ENCODE measurements at regions of chr12 and their contacts with region 1.

Region 1: GRCh38 chr12:19572920-19573558 is 133.7 kb downstream of the AEBP2 start:
- DNase-seq: peak; percentile 45
- H3K4me3 Mint-ChIP-seq: no peak overlapping the region
- H3K27ac Mint-ChIP-seq: no peak overlapping the region
- H3K4me1 Mint-ChIP-seq: no peaks in the 10 kb centered on the region
- H3K27me3 Mint-ChIP-seq: no peaks in the 10 kb centered on the region
- CTCF ChIP-seq: peak; percentile 53

Region 2: DNA sequence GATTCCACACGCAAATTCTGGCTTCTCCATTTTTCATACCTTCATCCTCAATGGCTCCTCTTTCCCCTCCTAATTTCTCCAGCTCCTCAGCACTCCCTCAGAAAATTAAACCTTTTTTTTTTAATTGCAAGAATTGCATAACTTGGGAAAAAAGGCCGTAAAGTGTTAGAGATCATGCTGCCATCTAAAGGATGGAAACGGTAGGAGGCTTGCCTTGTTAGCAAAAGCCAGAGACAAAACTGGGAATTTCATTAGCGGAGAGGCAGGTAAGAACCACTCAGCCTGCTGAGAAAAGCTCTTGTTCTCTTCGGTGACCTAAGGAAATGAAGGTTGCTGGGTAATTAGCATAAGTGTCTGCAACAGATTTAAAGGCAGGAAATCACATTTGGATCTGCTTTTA is 70.6 kb after region 1 on chr12:
- CTCF ChIA-PET with region 1: no interaction called
- intact Hi-C with region 1: loop called (anchors 2 kb)
- DNase-seq: peak; percentile 22
- H3K4me3 Mint-ChIP-seq: no peak overlapping the region
- H3K27ac Mint-ChIP-seq: no peak overlapping the region
- H3K4me1 Mint-ChIP-seq: peaks cover 32% of the 10 kb centered on the region
- H3K27me3 Mint-ChIP-seq: no peaks in the 10 kb centered on the region
- CTCF ChIP-seq: peak; percentile 32

Region 3: DNA sequence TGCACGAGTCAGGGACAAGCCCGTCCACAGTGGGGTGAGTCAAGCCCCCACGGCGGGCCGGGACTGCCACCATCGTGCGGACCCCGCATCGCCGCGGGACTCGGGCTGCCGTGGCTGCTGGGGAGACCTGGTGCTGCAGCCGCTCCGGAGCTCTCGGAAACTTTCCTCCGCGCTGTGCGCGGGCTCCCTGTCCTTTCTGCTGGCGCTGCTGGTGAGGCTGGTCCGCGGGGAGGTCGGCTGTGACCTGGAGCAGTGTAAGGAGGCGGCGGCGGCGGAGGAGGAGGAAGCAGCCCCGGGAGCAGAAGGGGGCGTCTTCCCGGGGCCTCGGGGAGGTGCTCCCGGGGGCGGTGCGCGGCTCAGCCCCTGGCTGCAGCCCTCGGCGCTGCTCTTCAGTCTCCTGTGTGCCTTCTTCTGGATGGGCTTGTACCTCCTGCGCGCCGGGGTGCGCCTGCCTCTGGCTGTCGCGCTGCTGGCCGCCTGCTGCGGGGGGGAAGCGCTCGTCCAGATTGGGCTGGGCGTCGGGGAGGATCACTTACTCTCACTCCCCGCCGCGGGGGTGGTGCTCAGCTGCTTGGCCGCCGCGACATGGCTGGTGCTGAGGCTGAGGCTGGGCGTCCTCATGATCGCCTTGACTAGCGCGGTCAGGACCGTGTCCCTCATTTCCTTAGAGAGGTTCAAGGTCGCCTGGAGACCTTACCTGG is 796.4 kb after region 1 on chr12:
- CTCF ChIA-PET with region 1: no interaction called
- intact Hi-C with region 1: loop called (anchors 10 kb)
- DNase-seq: peak; percentile 75
- H3K4me3 Mint-ChIP-seq: peak overlapping the region; percentile 94
- H3K27ac Mint-ChIP-seq: peak overlapping the region; percentile 78
- H3K4me1 Mint-ChIP-seq: peaks cover 35% of the 10 kb centered on the region
- H3K27me3 Mint-ChIP-seq: no peaks in the 10 kb centered on the region
- CTCF ChIP-seq: no peak

Measured in Calu3 (cell line).